Esophagus squamous epithelium (tissue), 5 donors: ENCODE measurements at regions of chr1 and their contacts with region 1.

Region 1: DNA sequence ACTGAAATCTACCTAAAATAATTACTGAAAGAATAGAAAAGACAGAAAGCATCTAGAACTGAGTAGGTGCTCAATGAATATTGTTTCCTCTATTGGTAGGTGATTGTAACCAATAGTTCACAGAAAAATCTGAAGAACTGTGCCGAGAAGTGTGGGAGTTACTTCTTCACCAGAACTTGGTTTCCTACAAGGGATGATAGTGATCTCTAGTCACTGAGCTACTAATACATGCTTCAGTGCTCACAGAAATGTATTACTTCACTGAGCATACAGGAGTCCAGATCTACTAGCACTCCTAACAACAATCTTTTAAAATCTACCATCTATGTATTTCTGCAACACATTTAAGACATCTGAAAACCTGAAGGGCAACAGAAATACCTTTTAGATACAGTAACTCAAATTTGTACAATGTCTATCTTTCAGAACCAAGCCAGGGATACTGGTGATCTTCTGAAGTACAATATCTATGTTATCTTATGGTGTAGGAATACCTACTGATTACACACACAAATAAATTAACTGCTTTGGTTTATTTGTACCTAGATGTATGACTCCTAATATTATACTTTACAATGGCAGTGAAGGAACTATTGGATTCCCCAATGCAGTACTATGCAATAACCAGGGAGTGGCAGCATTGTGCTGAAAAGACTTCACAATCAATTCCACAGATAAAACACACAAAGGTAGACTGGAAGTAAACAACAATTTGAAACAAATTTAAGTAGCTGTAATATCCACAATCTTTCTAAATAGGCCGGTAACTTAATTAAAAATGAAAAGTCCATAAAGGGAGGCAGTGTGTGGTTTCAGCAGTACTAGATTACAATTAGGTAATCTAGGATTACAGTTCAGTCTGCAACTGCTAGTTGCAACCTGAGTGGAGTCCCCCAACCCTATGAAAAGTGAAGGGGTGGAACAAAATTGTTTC is 243.0 kb downstream of the SLC45A1 start:
- DNase-seq: no peak
- H3K4me3 ChIP-seq: no peak overlapping the region
- H3K27ac ChIP-seq: no peak overlapping the region
- H3K4me1 ChIP-seq: peaks cover 0 to 4% (median 0%) of the 10 kb centered on the region in 3 donors
- H3K27me3 ChIP-seq: no peaks in the 10 kb centered on the region
- CTCF ChIP-seq: peak; percentile 81 to 95 (median 92)
- POLR2A ChIP-seq: no peak

Region 2: DNA sequence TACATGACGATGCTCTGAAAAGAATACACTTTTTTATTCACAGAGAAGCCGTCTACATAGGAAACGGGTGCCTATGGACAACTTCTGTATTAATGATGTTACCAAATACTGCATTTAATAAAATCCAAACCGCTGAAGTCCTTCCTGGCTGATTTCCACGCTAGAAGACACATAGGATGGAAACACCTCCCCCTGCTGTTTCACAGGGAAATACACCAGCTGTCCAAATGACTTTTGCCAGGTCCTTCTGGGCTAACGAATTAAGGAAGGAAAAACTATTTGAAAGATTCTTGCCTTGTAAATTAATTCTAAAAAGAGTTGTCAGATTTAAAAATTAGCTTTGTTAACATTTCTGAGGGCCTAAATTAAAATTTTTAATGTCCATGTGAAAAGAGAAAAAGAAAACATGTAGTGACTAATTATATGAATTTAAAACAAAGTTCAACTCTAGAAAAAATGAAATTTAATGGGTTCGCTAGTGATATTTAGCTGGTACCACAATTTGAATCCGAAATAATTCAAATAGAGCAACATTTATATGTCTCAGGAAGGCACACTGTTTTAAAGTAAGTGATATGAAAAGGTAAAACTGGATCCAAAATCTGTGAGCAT is 110.5 kb after region 1 on chr1:
- intact Hi-C with region 1: loop called (anchors 10 kb)
- DNase-seq: no peak
- H3K4me3 ChIP-seq: no peak overlapping the region
- H3K27ac ChIP-seq: no peak overlapping the region
- H3K4me1 ChIP-seq: peaks cover 4 to 62% (median 19%) of the 10 kb centered on the region in 3 donors
- H3K27me3 ChIP-seq: no peaks in the 10 kb centered on the region
- CTCF ChIP-seq: peak; percentile 67 to 88 (median 76)
- POLR2A ChIP-seq: no peak

Region 3: DNA sequence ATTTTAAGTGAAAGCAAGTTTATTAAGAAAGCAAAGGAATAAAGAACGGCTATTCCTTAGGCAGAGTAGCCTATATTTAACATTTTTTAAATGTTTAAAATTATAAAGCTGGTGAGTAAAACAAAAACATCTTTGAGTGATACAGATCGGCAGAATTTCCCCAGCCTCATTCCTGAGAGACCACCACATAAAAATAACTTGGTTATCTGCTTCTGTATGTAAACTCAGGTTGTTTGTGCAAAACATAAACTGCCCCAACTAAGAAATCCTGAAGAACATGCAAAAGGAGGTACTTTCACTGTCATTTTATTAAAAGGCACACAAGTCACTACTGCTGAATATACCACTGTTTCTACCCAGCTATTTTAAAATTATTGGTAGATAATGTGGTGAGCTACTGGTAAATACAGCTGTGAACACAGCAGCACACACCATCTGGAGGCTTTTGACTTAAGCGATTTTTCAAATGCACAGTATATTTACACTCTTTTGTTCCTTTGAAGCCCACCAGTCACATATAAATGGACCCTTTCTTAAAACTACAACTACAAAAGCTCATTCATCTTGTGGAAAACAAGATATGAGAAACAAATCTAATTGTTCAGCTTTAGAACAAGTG is 137.2 kb after region 1 on chr1:
- intact Hi-C with region 1: no loop called
- DNase-seq: no peak
- H3K4me3 ChIP-seq: no peak overlapping the region
- H3K27ac ChIP-seq: no peak overlapping the region
- H3K4me1 ChIP-seq: peaks cover 16 to 33% (median 17%) of the 10 kb centered on the region in 3 donors
- H3K27me3 ChIP-seq: no peaks in the 10 kb centered on the region
- CTCF ChIP-seq: no peak
- POLR2A ChIP-seq: no peak

Region 4: GRCh38 chr1:8727809-8728213 is 166.9 kb after region 1 on chr1:
- intact Hi-C with region 1: loop called (anchors 5 kb)
- DNase-seq: no peak
- H3K4me3 ChIP-seq: no peak overlapping the region
- H3K27ac ChIP-seq: no peak overlapping the region
- H3K4me1 ChIP-seq: peaks cover 0 to 21% (median 5%) of the 10 kb centered on the region in 3 donors
- H3K27me3 ChIP-seq: no peaks in the 10 kb centered on the region
- CTCF ChIP-seq: no peak
- POLR2A ChIP-seq: no peak

Region 5: GRCh38 chr1:8848663-8849386 is 287.9 kb after region 1 on chr1:
- intact Hi-C with region 1: loop called (anchors 10 kb)
- DNase-seq: no peak
- H3K4me3 ChIP-seq: peak overlapping the region in 1 of 4 donors; percentile 23
- H3K27ac ChIP-seq: peak overlapping the region in 2 of 4 donors; percentile 45 to 50
- H3K4me1 ChIP-seq: peaks cover 6 to 24% (median 8%) of the 10 kb centered on the region in 3 donors
- H3K27me3 ChIP-seq: no peaks in the 10 kb centered on the region
- CTCF ChIP-seq: peak; percentile 86 to 96 (median 90)
- POLR2A ChIP-seq: no peak